CD4-positive, alpha-beta memory T cell (primary cell): ENCODE measurements at regions of chr9 and their contacts with region 1.

Region 1: GRCh38 chr9:99184475-99185347 is 37.0 kb downstream of the ALG2 start:
- DNase-seq: peak; percentile 62 to 78 (median 67)
- H3K4me3 ChIP-seq: no peak overlapping the region
- H3K4me3 Mint-ChIP-seq: peak overlapping the region in 2 of 8 donors; percentile 12 to 41
- H3K27ac ChIP-seq: no peak overlapping the region
- H3K27ac Mint-ChIP-seq: peak overlapping the region in 3 of 7 donors; percentile 54 to 76 (median 55)
- H3K4me1 ChIP-seq: peaks cover 6% of the 10 kb centered on the region
- H3K4me1 Mint-ChIP-seq: peaks cover 5 to 7% (median 6%) of the 10 kb centered on the region in 4 donors
- H3K27me3 ChIP-seq: no peaks in the 10 kb centered on the region
- H3K27me3 Mint-ChIP-seq: peaks cover 2 to 4% of the 10 kb centered on the region in 2 donors

Region 2: GRCh38 chr9:98916660-98917059 is 268.1 kb before region 1 on chr9:
- CTCF ChIA-PET with region 1: no interaction called
- POLR2A ChIA-PET with region 1: no interaction called
- intact Hi-C with region 1: no loop called
- DNase-seq: no peak
- H3K4me3 ChIP-seq: no peak overlapping the region
- H3K4me3 Mint-ChIP-seq: no peak overlapping the region
- H3K27ac ChIP-seq: no peak overlapping the region
- H3K27ac Mint-ChIP-seq: no peak overlapping the region
- H3K4me1 ChIP-seq: no peaks in the 10 kb centered on the region
- H3K4me1 Mint-ChIP-seq: no peaks in the 10 kb centered on the region
- H3K27me3 ChIP-seq: no peaks in the 10 kb centered on the region
- H3K27me3 Mint-ChIP-seq: peaks cover 1 to 12% of the 10 kb centered on the region in 2 donors

Region 3: GRCh38 chr9:98998441-98999151 is 186.1 kb before region 1 on chr9:
- CTCF ChIA-PET with region 1: interaction called, 5 read pairs
- POLR2A ChIA-PET with region 1: no interaction called
- intact Hi-C with region 1: loop called (anchors 1 kb)
- DNase-seq: peak; percentile 32 to 52 (median 40)
- H3K4me3 ChIP-seq: no peak overlapping the region
- H3K4me3 Mint-ChIP-seq: no peak overlapping the region
- H3K27ac ChIP-seq: no peak overlapping the region
- H3K27ac Mint-ChIP-seq: no peak overlapping the region
- H3K4me1 ChIP-seq: peaks cover 16% of the 10 kb centered on the region
- H3K4me1 Mint-ChIP-seq: peaks cover 15 to 25% (median 16%) of the 10 kb centered on the region in 4 donors
- H3K27me3 ChIP-seq: no peaks in the 10 kb centered on the region
- H3K27me3 Mint-ChIP-seq: peaks cover 0 to 5% of the 10 kb centered on the region in 2 donors

Region 4: GRCh38 chr9:99130069-99130468 is 54.6 kb before region 1 on chr9:
- CTCF ChIA-PET with region 1: no interaction called
- POLR2A ChIA-PET with region 1: no interaction called
- intact Hi-C with region 1: no loop called
- DNase-seq: no peak
- H3K4me3 ChIP-seq: no peak overlapping the region
- H3K4me3 Mint-ChIP-seq: peak overlapping the region in 1 of 8 donors; percentile 38
- H3K27ac ChIP-seq: no peak overlapping the region
- H3K27ac Mint-ChIP-seq: peak overlapping the region in 2 of 7 donors; percentile 12 to 63
- H3K4me1 ChIP-seq: peaks cover 82% of the 10 kb centered on the region
- H3K4me1 Mint-ChIP-seq: peaks cover 58 to 91% (median 76%) of the 10 kb centered on the region in 4 donors
- H3K27me3 ChIP-seq: no peaks in the 10 kb centered on the region
- H3K27me3 Mint-ChIP-seq: no peaks in the 10 kb centered on the region

Region 5: DNA sequence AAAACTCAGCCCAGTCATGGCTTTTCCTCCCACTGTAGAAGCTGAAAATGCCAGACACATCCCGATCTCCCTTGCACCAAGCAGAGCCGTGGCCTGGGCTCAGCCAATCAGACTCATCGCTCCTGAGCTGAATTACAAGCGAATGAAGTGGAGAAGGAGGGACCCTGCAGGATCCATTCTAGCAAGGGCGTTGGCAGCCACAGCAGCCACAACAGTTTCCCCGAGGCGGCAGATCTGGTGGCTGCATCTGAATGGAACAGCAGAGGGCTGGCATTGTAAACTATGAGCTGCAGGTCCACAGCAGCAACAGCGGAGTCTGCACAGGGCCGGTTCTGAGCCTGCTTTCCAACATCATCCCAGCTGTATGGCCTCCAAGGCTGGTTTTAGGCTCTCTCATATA is 13.3 kb after region 1 on chr9:
- CTCF ChIA-PET with region 1: interaction called, 17 read pairs
- POLR2A ChIA-PET with region 1: no interaction called
- intact Hi-C with region 1: no loop called
- DNase-seq: no peak
- H3K4me3 ChIP-seq: no peak overlapping the region
- H3K4me3 Mint-ChIP-seq: no peak overlapping the region
- H3K27ac ChIP-seq: no peak overlapping the region
- H3K27ac Mint-ChIP-seq: no peak overlapping the region
- H3K4me1 ChIP-seq: no peaks in the 10 kb centered on the region
- H3K4me1 Mint-ChIP-seq: peaks cover 0 to 3% (median 0%) of the 10 kb centered on the region in 4 donors
- H3K27me3 ChIP-seq: no peaks in the 10 kb centered on the region
- H3K27me3 Mint-ChIP-seq: peaks cover 0 to 4% of the 10 kb centered on the region in 2 donors

Region 6: GRCh38 chr9:99614341-99614740 is 429.6 kb after region 1 on chr9:
- CTCF ChIA-PET with region 1: no interaction called
- POLR2A ChIA-PET with region 1: no interaction called
- intact Hi-C with region 1: no loop called
- DNase-seq: no peak
- H3K4me3 ChIP-seq: no peak overlapping the region
- H3K4me3 Mint-ChIP-seq: no peak overlapping the region
- H3K27ac ChIP-seq: no peak overlapping the region
- H3K27ac Mint-ChIP-seq: no peak overlapping the region
- H3K4me1 ChIP-seq: no peaks in the 10 kb centered on the region
- H3K4me1 Mint-ChIP-seq: no peaks in the 10 kb centered on the region
- H3K27me3 ChIP-seq: no peaks in the 10 kb centered on the region
- H3K27me3 Mint-ChIP-seq: peaks cover 13 to 18% of the 10 kb centered on the region in 2 donors

Region 7: GRCh38 chr9:99807276-99807852 is 622.7 kb after region 1 on chr9:
- CTCF ChIA-PET with region 1: no interaction called
- POLR2A ChIA-PET with region 1: no interaction called
- intact Hi-C with region 1: loop called (anchors 5 kb)
- DNase-seq: peak; percentile 67 to 78 (median 72)
- H3K4me3 ChIP-seq: no peak overlapping the region
- H3K4me3 Mint-ChIP-seq: no peak overlapping the region
- H3K27ac ChIP-seq: no peak overlapping the region
- H3K27ac Mint-ChIP-seq: peak overlapping the region in 6 of 7 donors; percentile 14 to 67 (median 38)
- H3K4me1 ChIP-seq: no peaks in the 10 kb centered on the region
- H3K4me1 Mint-ChIP-seq: peaks cover 0 to 6% (median 5%) of the 10 kb centered on the region in 4 donors
- H3K27me3 ChIP-seq: no peaks in the 10 kb centered on the region
- H3K27me3 Mint-ChIP-seq: peaks cover 5 to 8% of the 10 kb centered on the region in 2 donors

Region 8: DNA sequence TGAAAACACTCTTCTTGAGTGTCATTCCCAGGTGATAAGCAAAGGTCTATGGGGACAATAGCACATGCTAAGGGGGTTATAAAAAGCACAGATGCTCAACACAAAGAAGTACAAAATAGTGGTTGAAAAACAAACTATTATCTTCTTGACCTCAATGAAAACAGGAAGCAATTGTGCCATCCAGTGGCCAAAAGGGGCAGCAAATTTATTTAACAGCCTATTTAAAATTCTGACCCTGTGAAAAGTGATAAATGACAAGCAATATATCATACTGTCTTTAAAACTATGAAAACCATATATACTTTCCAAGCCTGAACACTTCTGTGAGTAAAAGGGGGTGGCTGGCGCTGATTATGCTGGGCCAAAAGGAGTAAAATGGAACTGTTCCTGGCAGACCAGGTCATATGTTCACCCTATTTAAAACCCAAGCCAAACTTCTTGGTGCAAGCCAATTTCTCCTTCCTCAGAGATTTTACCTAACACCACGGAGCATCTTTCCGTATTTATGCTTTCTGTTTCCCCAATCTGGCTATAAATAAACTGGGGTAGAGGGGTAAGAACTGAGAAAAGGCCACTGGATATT is 1138.3 kb after region 1 on chr9:
- CTCF ChIA-PET with region 1: no interaction called
- POLR2A ChIA-PET with region 1: no interaction called
- intact Hi-C with region 1: loop called (anchors 1 kb)
- DNase-seq: peak in 4 of 5 donors; percentile 8 to 26 (median 11)
- H3K4me3 ChIP-seq: no peak overlapping the region
- H3K4me3 Mint-ChIP-seq: no peak overlapping the region
- H3K27ac ChIP-seq: no peak overlapping the region
- H3K27ac Mint-ChIP-seq: peak overlapping the region in 3 of 7 donors; percentile 18 to 31 (median 19)
- H3K4me1 ChIP-seq: peaks cover 3% of the 10 kb centered on the region
- H3K4me1 Mint-ChIP-seq: peaks cover 12 to 13% (median 13%) of the 10 kb centered on the region in 4 donors
- H3K27me3 ChIP-seq: no peaks in the 10 kb centered on the region
- H3K27me3 Mint-ChIP-seq: no peaks in the 10 kb centered on the region